ENCODE measurements at regions of chr11 and their contacts with region 1.

Region 1: DNA sequence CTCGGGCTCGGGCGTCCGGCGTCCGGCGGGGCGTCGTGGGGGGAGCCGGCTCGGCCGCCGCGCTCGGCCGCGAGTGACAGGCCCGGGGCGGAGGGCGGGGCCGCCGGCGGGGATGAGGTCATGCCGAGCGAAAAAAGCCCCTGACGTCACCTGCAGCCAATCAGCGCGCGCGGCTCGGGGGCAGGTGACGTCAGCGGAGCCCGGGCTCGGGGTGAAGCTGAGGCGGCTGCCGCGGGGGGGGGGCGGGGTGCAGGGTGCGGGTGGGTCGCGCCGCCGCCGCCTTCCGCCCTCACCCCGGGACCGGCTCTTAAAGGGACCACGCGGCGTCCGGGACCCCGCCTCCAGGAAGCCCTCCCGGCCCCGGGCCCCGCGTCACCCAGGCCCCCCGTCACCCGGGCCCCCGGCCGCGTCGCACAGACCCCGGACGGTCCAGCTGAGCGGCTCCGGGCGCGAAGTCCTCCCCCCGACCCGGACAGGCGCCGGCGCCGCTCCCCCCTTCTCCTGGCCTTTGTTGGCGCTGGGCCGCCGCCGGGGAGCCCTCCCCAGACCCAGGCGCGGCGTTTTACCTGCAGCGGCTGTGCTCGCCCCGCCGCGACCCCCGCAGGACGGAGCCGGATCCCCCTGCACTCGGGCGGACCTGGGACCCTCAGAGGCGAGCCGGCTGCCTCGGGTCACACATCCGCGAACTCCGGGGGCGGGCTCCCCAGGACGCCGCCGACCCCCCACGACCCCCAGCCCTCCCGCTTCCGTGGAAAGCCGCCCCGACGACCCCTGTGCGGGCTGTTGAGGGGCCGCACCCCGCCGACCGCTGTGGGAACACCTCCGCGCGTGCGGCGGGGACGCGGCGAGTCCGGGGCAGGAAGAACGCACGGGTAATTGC is at the start of gene DUSP8:
- DNase-seq: peak; percentile 80
- H3K4me3 ChIP-seq: peak within 1 kb of the TSS; percentile 29 to 43 (median 42)
- H3K27ac ChIP-seq: peak within 1 kb of the TSS; percentile 29
- H3K4me1 ChIP-seq: peaks cover 5% of the 10 kb centered on the region
- H3K27me3 ChIP-seq: peaks cover 10 to 16% of the 10 kb centered on the region in 2 experiments
- CTCF ChIP-seq: no peak
- POLR2A ChIP-seq: no peak
- total RNA-seq, gene DUSP8: 5.9 and 8.7 TPM in 2 replicates

Region 2: GRCh38 chr11:1262172-1263006 is 310.0 kb before region 1 on chr11:
- CTCF ChIA-PET with region 1: interaction called, 13 read pairs
- POLR2A ChIA-PET with region 1: no interaction called
- dilution Hi-C with region 1: no loop called
- intact Hi-C with region 1: loop called (anchors 5 kb)
- DNase-seq: peak; percentile 88
- H3K4me3 ChIP-seq: peak overlapping the region in 2 of 3 experiments; percentile 36 to 53
- H3K27ac ChIP-seq: peak overlapping the region; percentile 52
- H3K4me1 ChIP-seq: peaks cover 4% of the 10 kb centered on the region
- H3K27me3 ChIP-seq: no peaks in the 10 kb centered on the region
- CTCF ChIP-seq: no peak
- POLR2A ChIP-seq: peak; percentile 76

Region 3: DNA sequence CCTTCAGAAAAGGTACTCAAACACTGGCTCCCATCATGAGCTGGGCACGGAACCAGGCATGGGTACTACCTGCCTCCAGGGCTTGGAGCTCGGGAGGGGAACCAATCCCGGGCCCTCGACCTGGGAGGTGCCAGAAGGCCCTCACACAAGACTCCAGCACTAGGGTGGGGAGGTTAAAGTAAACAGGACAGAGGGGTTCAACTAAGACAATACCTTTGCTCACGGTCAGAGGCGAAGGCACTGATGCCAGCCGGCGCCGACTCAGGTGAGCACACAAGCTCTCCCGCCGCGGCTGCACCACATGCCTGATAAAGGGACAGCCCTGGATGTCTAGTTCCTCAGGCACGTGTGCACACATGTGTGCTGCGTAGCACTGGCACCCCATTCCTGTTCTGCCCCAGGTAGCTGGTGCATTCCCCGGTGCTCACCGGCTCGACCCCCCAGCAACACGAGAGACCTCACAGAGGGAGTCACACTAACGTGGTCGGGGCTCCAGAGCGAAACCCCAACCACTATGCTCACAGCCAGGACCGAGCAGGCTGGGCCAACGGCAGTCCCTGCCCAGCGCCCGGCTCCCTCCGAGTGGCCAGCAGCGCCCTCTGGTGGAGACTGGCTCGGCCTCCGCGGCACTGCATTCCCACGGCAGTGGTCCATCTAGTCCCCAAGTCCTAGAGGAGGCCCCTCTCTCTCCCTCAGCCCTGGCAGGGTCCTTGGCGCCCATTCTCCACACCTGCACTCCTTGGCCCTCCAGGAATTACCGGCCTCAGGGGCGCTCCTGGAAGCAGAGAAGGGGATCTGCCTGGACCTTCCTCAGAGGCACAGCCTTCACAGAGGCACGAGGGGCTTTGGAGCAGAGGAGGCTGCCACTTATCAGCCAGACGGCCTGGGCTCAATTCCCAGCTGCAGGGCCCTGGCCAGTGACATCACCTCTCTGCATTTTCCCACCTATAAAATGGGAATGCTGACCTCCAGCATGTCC is 57.1 kb before region 1 on chr11:
- CTCF ChIA-PET with region 1: interaction called, 14 read pairs
- POLR2A ChIA-PET with region 1: no interaction called
- dilution Hi-C with region 1: no loop called
- intact Hi-C with region 1: loop called (anchors 1 kb)
- DNase-seq: peak; percentile 63
- H3K4me3 ChIP-seq: no peak overlapping the region
- H3K27ac ChIP-seq: no peak overlapping the region
- H3K4me1 ChIP-seq: no peaks in the 10 kb centered on the region
- H3K27me3 ChIP-seq: no peaks in the 10 kb centered on the region
- CTCF ChIP-seq: peak; percentile 93 to 98
- POLR2A ChIP-seq: no peak

Region 4: DNA sequence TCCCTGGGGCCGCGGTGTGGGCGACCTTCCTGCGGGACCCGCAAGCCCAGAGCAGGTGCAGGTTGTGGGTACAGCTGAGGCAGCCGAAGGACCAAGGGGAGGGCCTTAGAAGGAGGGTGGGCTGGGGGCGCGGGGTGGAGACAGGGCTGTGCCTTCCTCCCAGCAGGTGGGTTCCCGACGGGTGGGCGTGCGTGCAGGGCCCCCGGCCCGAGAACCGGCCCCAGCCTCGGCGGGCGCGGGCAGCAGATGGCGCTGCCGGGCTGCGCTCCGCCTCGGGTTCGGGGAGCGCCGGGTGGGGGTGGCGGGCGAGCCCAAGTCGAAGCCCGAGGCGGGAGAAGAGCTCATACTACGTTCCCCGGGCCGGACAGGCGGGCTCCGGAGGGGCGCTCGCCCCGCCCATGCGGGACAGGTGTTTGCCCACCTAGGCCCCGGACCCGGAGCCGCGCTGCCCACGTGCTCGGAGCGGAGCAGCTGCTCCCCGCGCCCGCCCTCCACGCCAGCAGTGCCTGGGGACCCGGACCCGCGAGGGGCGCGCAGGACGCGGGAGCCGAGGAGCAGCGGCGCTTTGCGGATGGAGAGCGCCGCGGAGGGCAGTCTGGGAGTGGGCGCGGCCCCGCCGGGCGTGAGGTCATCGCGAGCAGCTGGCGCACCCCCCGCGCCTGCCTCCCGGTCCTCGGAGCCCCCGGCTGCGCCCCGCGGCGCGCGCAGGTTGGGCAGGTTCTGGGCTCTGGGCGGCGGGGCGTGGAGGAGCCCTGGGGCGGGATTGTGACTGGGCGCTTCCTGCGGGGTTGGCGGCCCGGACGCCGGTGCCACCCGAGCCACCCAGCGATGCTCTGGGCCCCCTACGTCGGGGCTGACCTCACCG is 25.7 kb before region 1 on chr11:
- CTCF ChIA-PET with region 1: interaction called, 313 read pairs
- POLR2A ChIA-PET with region 1: no interaction called
- dilution Hi-C with region 1: no loop called
- intact Hi-C with region 1: loop called (anchors 1 kb)
- DNase-seq: peak; percentile 28
- H3K4me3 ChIP-seq: no peak overlapping the region
- H3K27ac ChIP-seq: no peak overlapping the region
- H3K4me1 ChIP-seq: peaks cover 2% of the 10 kb centered on the region
- H3K27me3 ChIP-seq: peaks cover 13 to 28% of the 10 kb centered on the region in 2 experiments
- CTCF ChIP-seq: peak; percentile 62 to 70
- POLR2A ChIP-seq: no peak

Region 5: DNA sequence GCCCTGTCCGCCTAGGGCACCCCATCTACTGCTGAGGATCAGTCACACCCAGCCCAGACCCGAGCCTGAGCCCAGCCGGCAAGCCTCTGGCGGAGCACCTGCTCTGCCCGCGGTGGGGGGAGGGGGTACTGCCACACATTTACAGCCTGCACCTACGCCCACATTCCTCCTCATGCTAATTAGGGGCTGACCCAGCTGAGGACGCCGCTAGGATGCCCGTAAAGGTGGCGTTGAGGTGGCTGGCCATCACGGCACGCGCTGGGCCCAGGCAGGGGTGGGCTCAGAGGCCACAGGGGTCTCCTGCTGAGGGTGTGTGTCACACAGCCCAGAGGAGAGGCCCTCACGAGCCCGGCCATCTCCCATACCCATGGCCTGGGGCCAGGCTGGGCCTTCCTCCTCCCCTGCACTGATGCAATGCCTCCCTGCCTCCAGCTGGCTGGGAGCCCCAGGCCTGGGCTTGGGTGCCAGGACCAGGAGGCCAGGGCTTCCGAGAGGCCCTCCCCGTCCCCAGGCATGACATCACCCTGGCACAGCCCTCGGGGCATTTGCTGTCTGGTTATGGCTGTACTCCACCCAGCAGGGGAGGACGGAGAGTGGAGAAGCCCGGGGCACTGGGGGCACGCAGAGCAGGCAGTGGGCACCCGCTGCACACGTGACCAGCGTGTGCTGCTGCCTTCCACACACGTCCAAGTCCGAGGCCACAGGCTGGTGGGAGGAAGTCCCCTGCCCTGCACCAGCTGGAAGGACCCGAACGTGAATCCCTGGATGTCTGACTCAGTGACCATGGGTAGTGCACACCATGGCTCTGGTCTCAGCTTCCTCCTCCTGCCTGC is 13.1 kb before region 1 on chr11:
- CTCF ChIA-PET with region 1: interaction called, 36 read pairs
- POLR2A ChIA-PET with region 1: no interaction called
- dilution Hi-C with region 1: no loop called
- intact Hi-C with region 1: no loop called
- DNase-seq: no peak
- H3K4me3 ChIP-seq: no peak overlapping the region
- H3K27ac ChIP-seq: no peak overlapping the region
- H3K4me1 ChIP-seq: no peaks in the 10 kb centered on the region
- H3K27me3 ChIP-seq: no peaks in the 10 kb centered on the region
- CTCF ChIP-seq: no peak
- POLR2A ChIP-seq: no peak

Region 6: DNA sequence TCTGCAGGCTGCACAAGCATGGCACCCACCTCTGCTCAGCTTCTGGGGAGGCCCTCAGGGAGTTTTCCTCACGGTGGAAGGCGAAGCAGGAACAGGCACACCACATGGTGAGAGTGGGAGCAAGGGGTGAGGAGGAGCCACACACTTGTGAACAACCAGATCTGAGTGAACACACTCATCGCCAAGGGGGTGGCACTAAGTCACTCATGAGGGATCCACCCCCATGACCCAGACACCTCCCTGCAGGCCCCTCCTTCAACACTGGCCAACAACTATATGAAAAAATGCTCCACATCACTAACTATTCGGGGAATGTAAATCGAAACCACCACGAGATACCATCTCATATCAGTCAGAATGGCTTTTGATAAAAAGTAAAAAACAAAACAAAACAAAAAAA is 26.4 kb after region 1 on chr11:
- CTCF ChIA-PET with region 1: interaction called, 55 read pairs
- POLR2A ChIA-PET with region 1: no interaction called
- dilution Hi-C with region 1: no loop called
- intact Hi-C with region 1: no loop called
- DNase-seq: no peak
- H3K4me3 ChIP-seq: no peak overlapping the region
- H3K27ac ChIP-seq: no peak overlapping the region
- H3K4me1 ChIP-seq: no peaks in the 10 kb centered on the region
- H3K27me3 ChIP-seq: peaks cover 0 to 5% of the 10 kb centered on the region in 2 experiments
- CTCF ChIP-seq: no peak
- POLR2A ChIP-seq: no peak

Region 7: DNA sequence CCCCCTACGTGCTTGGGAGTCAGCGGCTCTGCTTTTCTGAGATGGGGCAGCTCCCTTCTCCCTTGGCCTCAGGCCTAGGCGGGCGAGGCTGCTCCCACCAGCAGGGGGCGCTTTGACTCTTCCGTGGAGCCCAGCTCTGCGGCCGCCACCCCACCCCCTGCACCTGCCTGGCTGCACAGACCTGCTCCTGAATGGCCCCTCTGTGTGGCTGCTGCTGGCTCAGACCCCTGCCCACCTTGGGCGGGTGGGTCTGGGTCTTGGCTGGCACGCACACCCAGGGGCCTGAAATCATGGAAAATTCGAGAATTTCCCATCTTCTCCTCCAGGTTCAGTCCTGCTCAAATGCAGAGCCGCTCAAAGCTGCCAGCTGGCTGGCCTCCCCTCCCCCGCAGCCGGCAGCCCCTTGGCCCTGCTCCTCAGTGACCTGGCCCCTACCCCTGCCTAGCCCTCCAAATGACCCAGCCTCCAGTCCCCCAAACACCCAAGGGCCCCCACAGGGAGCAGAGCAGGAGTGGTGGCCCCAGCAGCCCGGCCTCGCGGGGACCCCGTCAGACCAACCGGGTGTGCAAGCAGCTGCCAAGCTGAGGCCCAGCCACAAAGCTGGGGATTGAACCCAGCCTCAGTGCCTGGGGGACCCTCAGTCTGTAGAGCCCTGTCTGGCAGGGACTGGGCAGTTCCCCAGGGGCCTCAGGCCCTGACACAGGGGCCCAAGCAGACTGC is 310.2 kb after region 1 on chr11:
- CTCF ChIA-PET with region 1: no interaction called
- POLR2A ChIA-PET with region 1: no interaction called
- dilution Hi-C with region 1: no loop called
- intact Hi-C with region 1: no loop called
- DNase-seq: peak; percentile 60
- H3K4me3 ChIP-seq: no peak overlapping the region
- H3K27ac ChIP-seq: no peak overlapping the region
- H3K4me1 ChIP-seq: no peaks in the 10 kb centered on the region
- H3K27me3 ChIP-seq: no peaks in the 10 kb centered on the region
- CTCF ChIP-seq: peak; percentile 91 to 98
- POLR2A ChIP-seq: no peak